Sigmoid colon (tissue), 7 donors: ENCODE measurements at regions of chr4 and their contacts with region 1.

Region 1: DNA sequence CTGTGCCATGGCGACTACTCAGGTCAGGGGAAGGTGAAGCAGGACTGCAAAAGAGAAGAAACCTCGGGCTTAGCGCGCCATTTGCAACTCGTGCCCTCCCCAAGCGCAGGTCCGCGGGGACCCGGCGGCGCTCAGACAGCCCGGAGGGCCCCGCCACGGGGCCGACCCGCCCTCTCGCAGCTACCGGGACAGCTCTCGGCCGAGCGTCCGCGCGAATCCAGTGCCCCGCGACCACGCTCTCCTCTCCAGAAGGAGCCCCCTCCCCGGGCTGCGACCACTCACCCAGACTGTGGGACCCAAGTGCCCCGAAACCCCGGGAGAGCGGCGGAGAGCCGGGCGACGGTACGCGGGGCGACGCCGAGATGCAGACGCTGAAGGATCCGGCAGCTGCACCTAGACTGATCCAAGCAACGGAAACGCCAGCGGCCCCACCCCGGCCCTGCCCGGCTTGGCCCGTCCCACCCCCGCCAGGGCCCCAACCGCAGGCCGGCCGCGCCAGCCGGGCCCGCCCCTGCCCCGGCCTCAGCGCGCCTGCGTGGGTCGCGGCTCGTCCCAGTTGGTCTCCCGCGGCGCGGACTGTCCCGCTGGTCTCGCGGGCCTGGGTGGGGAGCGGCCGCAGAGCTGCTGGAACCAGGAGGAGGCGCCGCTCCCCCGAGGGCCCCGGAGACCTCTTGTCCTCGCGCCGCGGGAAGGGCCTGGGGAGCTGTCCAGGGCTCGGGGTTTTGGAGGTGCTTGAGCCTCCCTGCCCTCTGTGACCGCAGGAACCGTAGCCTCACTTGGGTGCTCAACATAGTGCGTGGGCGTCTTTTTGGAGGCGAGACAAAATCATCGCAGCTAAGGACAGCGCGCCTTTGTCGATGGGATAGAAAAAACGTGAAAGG is at the start of gene ANXA5:
- DNase-seq: peak; percentile 96
- H3K4me3 ChIP-seq: peak within 1 kb of the TSS; percentile 94 to 100 (median 96)
- H3K27ac ChIP-seq: peak within 1 kb of the TSS; percentile 91 to 100 (median 97)
- H3K4me1 ChIP-seq: peaks cover 0 to 48% (median 27%) of the 10 kb centered on the region in 4 donors
- H3K27me3 ChIP-seq: no peaks in the 10 kb centered on the region
- CTCF ChIP-seq: peak in 1 of 4 experiments; percentile 33
- EP300 ChIP-seq: no peak
- POLR2A ChIP-seq: peak; percentile 19 to 75
- total RNA-seq, gene ANXA5: 152 to 224 (median 180) TPM

Region 2: GRCh38 chr4:121726642-121727268 is 29.9 kb after region 1 on chr4:
- intact Hi-C with region 1: loop called (anchors 1 kb)
- DNase-seq: no peak
- H3K4me3 ChIP-seq: no peak overlapping the region
- H3K27ac ChIP-seq: no peak overlapping the region
- H3K4me1 ChIP-seq: peaks cover 0 to 2% (median 0%) of the 10 kb centered on the region in 4 donors
- H3K27me3 ChIP-seq: no peaks in the 10 kb centered on the region
- CTCF ChIP-seq: peak; percentile 30 to 70 (median 52)
- EP300 ChIP-seq: no peak
- POLR2A ChIP-seq: no peak

Region 3: DNA sequence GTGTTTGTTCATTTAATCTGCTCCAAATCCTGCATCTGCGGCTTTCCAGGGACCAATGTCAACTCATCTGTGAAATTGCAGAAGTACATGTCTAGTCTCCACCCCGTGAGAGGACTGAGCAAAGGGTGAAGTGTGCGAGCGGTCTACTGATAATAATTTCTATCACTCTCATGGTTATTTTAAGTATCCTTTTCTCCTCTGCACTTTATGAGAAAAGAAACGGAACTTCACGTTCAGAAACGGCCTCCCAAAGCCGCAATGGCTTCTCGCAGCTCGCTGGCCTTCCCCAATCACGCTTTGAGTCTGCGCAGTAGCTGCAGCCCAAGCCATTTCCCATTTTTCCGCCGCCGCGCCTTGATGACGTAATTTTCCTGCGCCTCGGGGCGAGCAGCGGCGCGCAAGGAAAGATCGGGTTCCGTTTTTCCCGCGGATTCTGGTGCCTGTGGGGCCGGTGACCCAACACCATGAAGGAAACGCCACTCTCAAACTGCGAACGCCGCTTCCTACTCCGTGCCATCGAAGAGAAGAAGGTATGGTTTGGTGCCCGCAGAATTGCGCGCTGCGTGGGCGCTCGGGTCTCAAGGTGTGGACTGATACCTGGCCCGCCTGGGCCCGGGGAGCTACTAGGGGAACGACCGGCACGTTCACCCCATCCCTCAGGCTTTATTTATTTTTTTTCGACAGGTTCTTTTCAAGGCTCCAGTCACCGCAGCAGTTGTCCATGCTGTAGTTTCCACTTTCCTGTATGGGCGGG is 104.3 kb after region 1 on chr4 and contains the start of gene EXOSC9:
- intact Hi-C with region 1: loop called (anchors 5 kb)
- DNase-seq: peak; percentile 96
- H3K4me3 ChIP-seq: peak within 1 kb of the TSS; percentile 82 to 90 (median 88)
- H3K27ac ChIP-seq: peak within 1 kb of the TSS; percentile 85 to 96 (median 89)
- H3K4me1 ChIP-seq: peaks cover 0 to 17% (median 9%) of the 10 kb centered on the region in 4 donors
- H3K27me3 ChIP-seq: no peaks in the 10 kb centered on the region
- CTCF ChIP-seq: no peak
- EP300 ChIP-seq: peak in 1 of 4 donors; percentile 53
- POLR2A ChIP-seq: peak; percentile 74 to 80
- total RNA-seq, gene EXOSC9: 12.5 to 25.3 (median 18.6) TPM

Region 4: GRCh38 chr4:121823505-121824170 is 126.8 kb after region 1 on chr4 and contains the start of gene CCNA2:
- intact Hi-C with region 1: loop called (anchors 5 kb)
- DNase-seq: peak; percentile 98
- H3K4me3 ChIP-seq: peak within 1 kb of the TSS; percentile 44 to 62 (median 54)
- H3K27ac ChIP-seq: peak within 1 kb of the TSS; percentile 77 to 85 (median 80)
- H3K4me1 ChIP-seq: peaks cover 0 to 20% (median 9%) of the 10 kb centered on the region in 4 donors
- H3K27me3 ChIP-seq: no peaks in the 10 kb centered on the region
- CTCF ChIP-seq: no peak
- EP300 ChIP-seq: no peak
- POLR2A ChIP-seq: peak in 1 of 2 donors; percentile 47
- total RNA-seq, gene CCNA2: 2.1 to 2.3 (median 2.2) TPM

Region 5: DNA sequence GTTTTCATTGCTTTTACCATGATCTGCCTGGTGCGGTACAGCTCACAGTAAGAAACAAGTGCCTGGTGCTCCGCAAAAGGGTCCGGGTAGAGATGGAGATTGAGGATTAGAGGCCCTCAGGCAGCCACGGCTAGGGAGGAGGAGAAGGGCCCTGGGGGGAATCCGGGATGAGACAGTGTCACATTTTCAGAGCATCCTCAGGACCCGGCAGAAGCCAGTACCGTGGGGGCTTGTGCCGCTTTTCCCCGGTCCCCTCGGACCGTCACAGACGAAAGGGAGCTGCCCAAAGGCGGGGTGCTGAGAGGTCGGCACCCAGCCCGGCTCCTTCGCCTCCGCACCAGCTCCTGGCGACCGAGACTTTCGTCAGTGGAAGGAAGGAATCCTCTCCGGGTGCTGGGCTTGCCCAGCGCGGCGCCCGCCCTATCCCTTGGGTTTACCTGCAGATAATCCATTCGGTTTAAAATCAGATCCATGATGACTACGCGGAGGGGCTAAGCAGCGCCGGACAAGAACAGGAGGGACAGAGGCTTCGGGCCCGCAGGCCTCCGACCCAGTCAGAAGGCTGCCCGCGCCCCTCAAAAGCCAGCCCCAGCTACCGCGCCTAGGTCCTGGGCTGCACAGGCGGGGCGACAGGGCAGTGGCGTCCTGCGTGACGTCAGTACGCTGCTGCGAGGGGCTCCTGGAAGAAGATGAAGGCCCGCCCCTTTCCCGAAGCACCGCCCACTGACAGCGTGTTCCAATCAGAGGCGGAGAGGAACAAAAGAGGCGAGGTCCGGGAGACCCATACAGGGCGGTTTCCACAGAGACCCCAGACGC is 173.2 kb after region 1 on chr4 and contains the start of gene BBS7:
- intact Hi-C with region 1: loop called (anchors 5 kb)
- DNase-seq: peak; percentile 99
- H3K4me3 ChIP-seq: peak within 1 kb of the TSS; percentile 59 to 91 (median 76)
- H3K27ac ChIP-seq: peak within 1 kb of the TSS; percentile 86 to 97 (median 90)
- H3K4me1 ChIP-seq: peaks cover 0 to 14% (median 6%) of the 10 kb centered on the region in 4 donors
- H3K27me3 ChIP-seq: no peaks in the 10 kb centered on the region
- CTCF ChIP-seq: no peak
- EP300 ChIP-seq: no peak
- POLR2A ChIP-seq: peak; percentile 56 to 65
- total RNA-seq, gene BBS7: 12.7 to 14.6 (median 13.6) TPM

Region 6: GRCh38 chr4:121989715-121990114 is 292.9 kb after region 1 on chr4:
- intact Hi-C with region 1: no loop called
- DNase-seq: no peak
- H3K4me3 ChIP-seq: no peak overlapping the region
- H3K27ac ChIP-seq: no peak overlapping the region
- H3K4me1 ChIP-seq: no peaks in the 10 kb centered on the region
- H3K27me3 ChIP-seq: no peaks in the 10 kb centered on the region
- CTCF ChIP-seq: no peak
- EP300 ChIP-seq: no peak
- POLR2A ChIP-seq: no peak